Activated CD8-positive, alpha-beta T cell treated with anti-CD3 and anti-CD28 coated beads, Interleukin-2, amount 10 ng/mL, durations not matched to agents 7 days and 5 days (primary cell): ENCODE measurements at regions of chr2 and their contacts with region 1.

Region 1: DNA sequence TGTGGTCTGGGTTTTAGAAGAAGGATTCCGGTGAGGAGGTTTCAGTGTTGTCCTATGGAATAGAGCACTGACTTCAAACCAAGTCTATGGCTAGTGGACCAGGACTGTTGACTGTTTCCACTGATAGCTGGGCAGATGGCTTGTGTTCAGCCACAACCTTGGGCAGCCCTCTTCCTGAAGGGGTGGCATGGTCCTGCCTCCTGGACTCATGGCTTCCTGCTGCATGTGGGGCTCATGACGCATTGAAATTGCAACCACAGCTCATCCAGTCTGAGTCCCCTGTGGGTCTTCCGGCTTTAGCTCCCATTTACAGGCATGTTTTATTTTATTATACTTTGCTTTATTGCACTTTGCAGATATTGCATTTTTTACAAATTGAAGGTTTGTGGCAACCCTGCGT is 105.0 kb downstream of the B3GNT2 start:
- DNase-seq: no peak
- ATAC-seq: no peak
- H3K4me3 Mint-ChIP-seq: no peak overlapping the region
- H3K27ac Mint-ChIP-seq: no peak overlapping the region
- H3K4me1 Mint-ChIP-seq: peaks cover 55% of the 10 kb centered on the region
- H3K27me3 Mint-ChIP-seq: no peaks in the 10 kb centered on the region

Region 2: GRCh38 chr2:62287899-62288880 is 12.7 kb before region 1 on chr2:
- CTCF ChIA-PET with region 1: interaction called, 12 read pairs
- POLR2A ChIA-PET with region 1: no interaction called
- DNase-seq: peak; percentile 41
- ATAC-seq: peak; percentile 39
- H3K4me3 Mint-ChIP-seq: no peak overlapping the region
- H3K27ac Mint-ChIP-seq: peak overlapping the region; percentile 78
- H3K4me1 Mint-ChIP-seq: peaks cover 28% of the 10 kb centered on the region
- H3K27me3 Mint-ChIP-seq: no peaks in the 10 kb centered on the region

Region 3: DNA sequence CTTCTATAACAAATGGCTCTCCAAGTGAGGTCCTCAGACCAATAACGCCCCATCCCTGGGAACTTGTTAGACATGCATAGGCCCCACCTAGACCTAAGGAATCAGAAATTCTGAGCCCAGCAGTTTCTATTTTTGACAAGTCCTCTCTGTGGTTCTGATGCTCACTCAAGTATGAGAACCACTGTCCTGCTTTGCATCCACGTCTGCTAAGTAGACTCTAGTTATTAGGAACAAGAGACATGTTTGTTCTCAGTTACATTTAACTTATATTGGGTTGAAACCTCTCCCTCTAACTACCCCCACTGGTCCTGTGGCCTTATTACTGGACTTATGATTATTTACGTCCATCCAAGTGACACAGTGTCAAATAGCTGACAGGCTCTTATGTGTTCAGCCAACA is 134.8 kb after region 1 on chr2:
- CTCF ChIA-PET with region 1: no interaction called
- POLR2A ChIA-PET with region 1: no interaction called
- DNase-seq: no peak
- ATAC-seq: no peak
- H3K4me3 Mint-ChIP-seq: no peak overlapping the region
- H3K27ac Mint-ChIP-seq: no peak overlapping the region
- H3K4me1 Mint-ChIP-seq: no peaks in the 10 kb centered on the region
- H3K27me3 Mint-ChIP-seq: peaks cover 3% of the 10 kb centered on the region